Sigmoid colon (tissue), 7 donors: ENCODE measurements at regions of chr3 and their contacts with region 1.

Region 1: GRCh38 chr3:181709537-181710279 is 2.0 kb upstream of the SOX2 start:
- DNase-seq: peak; percentile 78
- H3K4me3 ChIP-seq: no peak overlapping the region
- H3K27ac ChIP-seq: no peak overlapping the region
- H3K4me1 ChIP-seq: peaks cover 0 to 35% (median 26%) of the 10 kb centered on the region in 4 donors
- H3K27me3 ChIP-seq: peaks cover 41 to 100% (median 99%) of the 10 kb centered on the region in 3 donors
- CTCF ChIP-seq: peak; percentile 36 to 68 (median 56)
- EP300 ChIP-seq: no peak
- POLR2A ChIP-seq: no peak

Region 2: DNA sequence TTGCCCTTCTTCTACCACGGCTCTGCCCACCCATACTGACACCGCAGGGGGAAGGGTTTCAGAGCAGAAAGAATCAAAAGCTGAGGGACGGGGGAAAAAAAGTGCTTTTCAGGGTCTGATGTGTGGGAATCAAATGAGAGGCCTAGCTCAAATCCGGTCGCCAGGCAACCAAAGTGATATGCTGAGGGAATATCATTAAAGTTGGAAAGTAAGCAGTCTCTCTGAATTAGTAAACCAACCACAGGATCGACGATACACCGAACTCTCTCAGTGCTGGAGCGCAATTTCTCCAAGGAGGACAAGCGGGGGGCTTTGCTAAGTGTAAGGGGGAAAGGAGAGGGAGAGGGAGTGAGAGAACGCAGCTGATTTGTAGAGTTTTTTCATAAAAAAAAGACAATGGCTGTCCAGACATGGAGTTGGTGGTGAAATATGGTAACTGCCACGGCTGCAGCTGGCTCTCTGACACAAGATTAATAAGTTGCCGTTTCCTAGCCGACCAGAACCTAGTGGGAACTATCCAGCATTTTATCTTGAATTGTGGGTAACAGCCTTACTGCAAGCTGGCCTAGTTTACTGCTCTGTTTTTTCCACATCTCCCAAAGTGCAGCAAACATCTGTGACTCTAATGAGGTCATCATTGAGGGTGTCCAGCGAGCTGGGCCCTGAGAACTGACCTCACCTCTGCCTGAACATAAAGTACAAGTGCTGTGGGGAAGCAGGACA is 532.2 kb after region 1 on chr3:
- intact Hi-C with region 1: loop called (anchors 5 kb)
- DNase-seq: peak; percentile 86
- H3K4me3 ChIP-seq: no peak overlapping the region
- H3K27ac ChIP-seq: peak overlapping the region; percentile 54 to 67 (median 56)
- H3K4me1 ChIP-seq: peaks cover 0 to 5% (median 2%) of the 10 kb centered on the region in 4 donors
- H3K27me3 ChIP-seq: no peaks in the 10 kb centered on the region
- CTCF ChIP-seq: no peak
- EP300 ChIP-seq: no peak
- POLR2A ChIP-seq: no peak

Region 3: GRCh38 chr3:182258538-182259177 is 549.0 kb after region 1 on chr3:
- intact Hi-C with region 1: loop called (anchors 5 kb)
- DNase-seq: no peak
- H3K4me3 ChIP-seq: no peak overlapping the region
- H3K27ac ChIP-seq: no peak overlapping the region
- H3K4me1 ChIP-seq: no peaks in the 10 kb centered on the region
- H3K27me3 ChIP-seq: peaks cover 0 to 14% (median 0%) of the 10 kb centered on the region in 3 donors
- CTCF ChIP-seq: peak in 2 of 4 experiments; percentile 11 to 32
- EP300 ChIP-seq: no peak
- POLR2A ChIP-seq: no peak

Region 4: DNA sequence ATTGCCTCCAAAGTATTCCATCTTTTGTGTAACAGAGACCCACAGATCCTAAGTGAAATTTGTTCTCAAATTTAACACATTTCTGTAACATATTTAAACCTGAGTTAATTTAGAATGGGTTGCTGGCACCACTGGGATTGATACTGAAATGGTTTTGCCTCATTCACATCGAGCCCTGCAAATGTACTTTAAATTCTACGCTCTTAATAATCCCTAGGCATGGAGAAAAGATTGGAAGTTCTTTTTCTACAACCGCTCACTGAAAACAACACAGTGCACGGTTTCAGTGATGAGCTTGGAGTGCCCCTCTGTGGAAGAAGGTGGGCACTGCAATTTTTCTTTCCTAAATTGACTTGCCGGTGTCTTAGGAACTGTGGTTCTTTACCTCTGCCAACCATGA is 973.7 kb after region 1 on chr3:
- intact Hi-C with region 1: loop called (anchors 2 kb)
- DNase-seq: no peak
- H3K4me3 ChIP-seq: peak overlapping the region in 3 of 4 donors; percentile 48 to 59 (median 58)
- H3K27ac ChIP-seq: no peak overlapping the region
- H3K4me1 ChIP-seq: peaks cover 0 to 17% (median 10%) of the 10 kb centered on the region in 4 donors
- H3K27me3 ChIP-seq: peaks cover 0 to 37% (median 0%) of the 10 kb centered on the region in 3 donors
- CTCF ChIP-seq: peak; percentile 41 to 88 (median 75)
- EP300 ChIP-seq: no peak
- POLR2A ChIP-seq: no peak